Cardiac septum (tissue), 1 donor: ENCODE measurements at regions of chr7 and their contacts with region 1.

Region 1: DNA sequence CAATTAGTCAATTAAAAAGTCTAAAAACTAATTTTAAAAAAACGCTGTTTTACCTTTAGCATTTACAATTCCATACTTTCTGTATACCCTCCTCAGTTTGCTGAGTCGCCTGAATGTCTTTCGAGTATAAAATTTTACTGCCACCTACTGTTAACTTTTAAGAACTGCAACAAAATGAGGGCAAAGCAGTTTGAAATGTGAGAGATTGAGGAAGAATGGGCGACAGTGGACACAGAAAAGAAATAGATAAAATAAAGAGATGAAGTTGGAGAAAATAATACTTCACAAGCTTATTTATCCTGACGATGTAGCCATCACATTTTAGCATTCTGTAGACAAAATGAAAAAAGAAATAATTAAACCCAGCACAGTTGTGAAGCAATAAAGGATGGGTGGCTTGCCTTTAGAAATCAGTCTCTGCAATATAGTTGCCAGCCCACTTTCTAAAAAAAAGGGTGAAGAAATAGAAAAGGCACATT is 110.8 kb upstream of the PTN start:
- DNase-seq: no peak

Region 2: DNA sequence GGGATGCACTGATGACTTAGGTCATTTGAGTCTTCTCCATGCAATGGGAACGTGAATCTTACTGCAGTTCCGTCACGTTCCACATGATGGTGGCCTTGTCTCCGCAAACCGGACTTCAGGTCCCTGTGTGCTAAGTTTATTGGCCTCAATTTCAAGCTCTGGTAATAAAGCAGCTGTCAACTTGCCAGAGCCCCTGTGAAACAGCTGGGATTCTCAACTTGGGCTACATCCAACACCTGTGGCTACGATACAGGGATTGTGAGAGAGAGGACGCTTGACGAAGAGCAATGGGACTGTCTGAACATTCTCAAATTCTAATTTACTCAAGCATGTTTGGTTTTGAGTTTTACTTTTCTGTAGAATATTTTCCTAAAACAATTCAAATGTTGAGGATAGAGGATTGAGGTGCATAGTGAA is 285.0 kb before region 1 on chr7:
- intact Hi-C with region 1: loop called (anchors 2 kb)
- DNase-seq: no peak

Region 3: GRCh38 chr7:137592232-137592896 is 138.1 kb after region 1 on chr7:
- intact Hi-C with region 1: loop called (anchors 10 kb)
- DNase-seq: no peak